Natural killer cell (primary cell): ENCODE measurements at regions of chr2 and their contacts with region 1.

Region 1: GRCh38 chr2:134897932-134898331 is 20.7 kb upstream of the CCNT2 start:
- DNase-seq: peak in 1 of 2 donors; percentile 38
- ATAC-seq: no peak
- H3K4me3 ChIP-seq: no peak overlapping the region
- H3K4me3 Mint-ChIP-seq: no peak overlapping the region
- H3K27ac ChIP-seq: no peak overlapping the region
- H3K27ac Mint-ChIP-seq: no peak overlapping the region
- H3K4me1 ChIP-seq: no peaks in the 10 kb centered on the region
- H3K4me1 Mint-ChIP-seq: no peaks in the 10 kb centered on the region
- H3K27me3 ChIP-seq: no peaks in the 10 kb centered on the region
- H3K27me3 Mint-ChIP-seq: peaks cover 0 to 2% of the 10 kb centered on the region in 2 donors
- CTCF ChIP-seq: peak; percentile 66

Region 2: GRCh38 chr2:134451347-134451630 is 446.6 kb before region 1 on chr2:
- intact Hi-C with region 1: loop called (anchors 1 kb)
- DNase-seq: no peak
- ATAC-seq: no peak
- H3K4me3 ChIP-seq: no peak overlapping the region
- H3K4me3 Mint-ChIP-seq: peak overlapping the region; percentile 2
- H3K27ac ChIP-seq: no peak overlapping the region
- H3K27ac Mint-ChIP-seq: peak overlapping the region in 1 of 2 donors; percentile 19
- H3K4me1 ChIP-seq: no peaks in the 10 kb centered on the region
- H3K4me1 Mint-ChIP-seq: peaks cover 4 to 6% of the 10 kb centered on the region in 2 donors
- H3K27me3 ChIP-seq: no peaks in the 10 kb centered on the region
- H3K27me3 Mint-ChIP-seq: no peaks in the 10 kb centered on the region
- CTCF ChIP-seq: no peak

Region 3: DNA sequence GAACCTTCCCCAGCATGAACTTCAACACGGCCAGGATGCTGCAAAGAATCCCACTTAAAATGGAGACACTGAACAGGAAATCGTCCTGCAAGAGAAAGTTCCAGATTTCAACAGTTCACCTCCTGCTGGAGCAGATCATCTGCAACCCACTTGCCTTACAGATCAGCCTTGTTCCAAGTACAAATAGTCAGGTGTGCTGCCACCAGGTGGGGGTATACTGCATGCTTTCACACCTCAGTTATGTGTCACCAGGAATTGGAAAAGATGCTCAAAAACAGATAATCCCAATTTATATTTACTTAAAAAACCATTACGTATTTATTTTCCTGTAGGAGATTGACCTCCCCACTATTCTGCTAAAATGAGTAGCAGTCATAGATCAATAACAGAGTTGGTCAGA is 431.8 kb before region 1 on chr2:
- intact Hi-C with region 1: loop called (anchors 5 kb)
- DNase-seq: peak in 1 of 2 donors; percentile 60
- ATAC-seq: no peak
- H3K4me3 ChIP-seq: no peak overlapping the region
- H3K4me3 Mint-ChIP-seq: no peak overlapping the region
- H3K27ac ChIP-seq: no peak overlapping the region
- H3K27ac Mint-ChIP-seq: peak overlapping the region in 1 of 2 donors; percentile 45
- H3K4me1 ChIP-seq: no peaks in the 10 kb centered on the region
- H3K4me1 Mint-ChIP-seq: peaks cover 0 to 10% of the 10 kb centered on the region in 2 donors
- H3K27me3 ChIP-seq: no peaks in the 10 kb centered on the region
- H3K27me3 Mint-ChIP-seq: no peaks in the 10 kb centered on the region
- CTCF ChIP-seq: no peak